ENCODE measurements at regions of chr17 and their contacts with region 1.

Region 1: GRCh38 chr17:48878918-48879898 is 13.4 kb upstream of the ATP5MC1 start:
- DNase-seq: peak; percentile 78
- H3K4me3 Mint-ChIP-seq: no peak overlapping the region
- H3K27ac Mint-ChIP-seq: no peak overlapping the region
- H3K4me1 Mint-ChIP-seq: no peaks in the 10 kb centered on the region
- H3K27me3 Mint-ChIP-seq: no peaks in the 10 kb centered on the region
- CTCF ChIP-seq: peak; percentile 83

Region 2: GRCh38 chr17:48625495-48626244 is 253.5 kb before region 1 on chr17:
- CTCF ChIA-PET with region 1: no interaction called
- POLR2A ChIA-PET with region 1: no interaction called
- intact Hi-C with region 1: no loop called
- DNase-seq: peak; percentile 44
- H3K4me3 Mint-ChIP-seq: peak overlapping the region; percentile 72
- H3K27ac Mint-ChIP-seq: no peak overlapping the region
- H3K4me1 Mint-ChIP-seq: peaks cover 6% of the 10 kb centered on the region
- H3K27me3 Mint-ChIP-seq: peaks cover 99% of the 10 kb centered on the region
- CTCF ChIP-seq: no peak

Region 3: DNA sequence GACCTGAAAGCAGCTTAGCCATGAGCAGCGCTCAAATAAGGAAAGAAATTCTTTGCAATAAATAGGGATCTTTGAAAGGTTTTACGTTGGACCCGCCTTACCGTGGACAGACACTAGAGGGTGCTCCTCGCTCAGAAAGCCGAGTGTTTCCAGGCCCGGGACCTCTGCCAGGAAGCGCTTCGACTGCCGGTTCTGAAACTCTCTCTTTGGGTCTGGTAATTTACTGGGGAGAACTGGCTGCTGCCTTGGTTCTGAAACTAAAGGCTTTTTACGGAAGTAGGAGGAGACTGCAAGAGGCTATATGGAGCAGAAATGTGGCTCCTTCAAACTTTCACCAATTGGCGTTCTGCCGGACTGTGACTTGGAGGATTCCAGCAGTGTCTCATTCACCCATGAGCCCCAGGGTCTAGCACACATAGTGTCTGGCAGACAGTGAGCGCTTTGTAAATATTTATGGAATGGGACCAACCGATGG is 207.5 kb before region 1 on chr17:
- CTCF ChIA-PET with region 1: interaction called, 89 read pairs
- POLR2A ChIA-PET with region 1: no interaction called
- intact Hi-C with region 1: loop called (anchors 2 kb)
- DNase-seq: peak; percentile 75
- H3K4me3 Mint-ChIP-seq: peak overlapping the region; percentile 75
- H3K27ac Mint-ChIP-seq: no peak overlapping the region
- H3K4me1 Mint-ChIP-seq: no peaks in the 10 kb centered on the region
- H3K27me3 Mint-ChIP-seq: peaks cover 22% of the 10 kb centered on the region
- CTCF ChIP-seq: peak; percentile 87

Region 4: GRCh38 chr17:48724251-48725003 is 154.8 kb before region 1 on chr17:
- CTCF ChIA-PET with region 1: interaction called, 46 read pairs
- POLR2A ChIA-PET with region 1: interaction called, 6 read pairs
- intact Hi-C with region 1: loop called (anchors 1 kb)
- DNase-seq: peak; percentile 78
- H3K4me3 Mint-ChIP-seq: peak overlapping the region; percentile 17
- H3K27ac Mint-ChIP-seq: no peak overlapping the region
- H3K4me1 Mint-ChIP-seq: peaks cover 11% of the 10 kb centered on the region
- H3K27me3 Mint-ChIP-seq: peaks cover 56% of the 10 kb centered on the region
- CTCF ChIP-seq: peak; percentile 74

Region 5: GRCh38 chr17:48816774-48817590 is 62.2 kb before region 1 on chr17 and contains the start of gene TTLL6:
- CTCF ChIA-PET with region 1: interaction called, 25 read pairs
- POLR2A ChIA-PET with region 1: interaction called, 5 read pairs
- intact Hi-C with region 1: loop called (anchors 1 kb)
- DNase-seq: peak; percentile 92
- H3K4me3 Mint-ChIP-seq: peak within 1 kb of the TSS; percentile 39
- H3K27ac Mint-ChIP-seq: no peak within 1 kb of the TSS
- H3K4me1 Mint-ChIP-seq: peaks cover 10% of the 10 kb centered on the region
- H3K27me3 Mint-ChIP-seq: peaks cover 11% of the 10 kb centered on the region
- CTCF ChIP-seq: no peak
- total RNA-seq, gene TTLL6: not detected in 2 replicates

Region 6: GRCh38 chr17:48850792-48851323 is 28.4 kb before region 1 on chr17:
- CTCF ChIA-PET with region 1: interaction called, 19 read pairs
- POLR2A ChIA-PET with region 1: interaction called, 4 read pairs
- intact Hi-C with region 1: no loop called
- DNase-seq: no peak
- H3K4me3 Mint-ChIP-seq: no peak overlapping the region
- H3K27ac Mint-ChIP-seq: no peak overlapping the region
- H3K4me1 Mint-ChIP-seq: no peaks in the 10 kb centered on the region
- H3K27me3 Mint-ChIP-seq: no peaks in the 10 kb centered on the region
- CTCF ChIP-seq: no peak

Region 7: GRCh38 chr17:48892940-48893645 is 13.9 kb after region 1 on chr17:
- CTCF ChIA-PET with region 1: interaction called, 15 read pairs
- POLR2A ChIA-PET with region 1: interaction called, 11 read pairs
- intact Hi-C with region 1: no loop called
- DNase-seq: no peak
- H3K4me3 Mint-ChIP-seq: peak overlapping the region; percentile 99
- H3K27ac Mint-ChIP-seq: peak overlapping the region; percentile 95
- H3K4me1 Mint-ChIP-seq: no peaks in the 10 kb centered on the region
- H3K27me3 Mint-ChIP-seq: no peaks in the 10 kb centered on the region
- CTCF ChIP-seq: no peak

Region 8: GRCh38 chr17:49249292-49249794 is 370.1 kb after region 1 on chr17:
- CTCF ChIA-PET with region 1: no interaction called
- POLR2A ChIA-PET with region 1: no interaction called
- intact Hi-C with region 1: no loop called
- DNase-seq: no peak
- H3K4me3 Mint-ChIP-seq: no peak overlapping the region
- H3K27ac Mint-ChIP-seq: peak overlapping the region; percentile 52
- H3K4me1 Mint-ChIP-seq: peaks cover 11% of the 10 kb centered on the region
- H3K27me3 Mint-ChIP-seq: no peaks in the 10 kb centered on the region
- CTCF ChIP-seq: no peak